Motor neuron (in vitro differentiated cells): ENCODE measurements at regions of chr5 and their contacts with region 1.

Region 1: DNA sequence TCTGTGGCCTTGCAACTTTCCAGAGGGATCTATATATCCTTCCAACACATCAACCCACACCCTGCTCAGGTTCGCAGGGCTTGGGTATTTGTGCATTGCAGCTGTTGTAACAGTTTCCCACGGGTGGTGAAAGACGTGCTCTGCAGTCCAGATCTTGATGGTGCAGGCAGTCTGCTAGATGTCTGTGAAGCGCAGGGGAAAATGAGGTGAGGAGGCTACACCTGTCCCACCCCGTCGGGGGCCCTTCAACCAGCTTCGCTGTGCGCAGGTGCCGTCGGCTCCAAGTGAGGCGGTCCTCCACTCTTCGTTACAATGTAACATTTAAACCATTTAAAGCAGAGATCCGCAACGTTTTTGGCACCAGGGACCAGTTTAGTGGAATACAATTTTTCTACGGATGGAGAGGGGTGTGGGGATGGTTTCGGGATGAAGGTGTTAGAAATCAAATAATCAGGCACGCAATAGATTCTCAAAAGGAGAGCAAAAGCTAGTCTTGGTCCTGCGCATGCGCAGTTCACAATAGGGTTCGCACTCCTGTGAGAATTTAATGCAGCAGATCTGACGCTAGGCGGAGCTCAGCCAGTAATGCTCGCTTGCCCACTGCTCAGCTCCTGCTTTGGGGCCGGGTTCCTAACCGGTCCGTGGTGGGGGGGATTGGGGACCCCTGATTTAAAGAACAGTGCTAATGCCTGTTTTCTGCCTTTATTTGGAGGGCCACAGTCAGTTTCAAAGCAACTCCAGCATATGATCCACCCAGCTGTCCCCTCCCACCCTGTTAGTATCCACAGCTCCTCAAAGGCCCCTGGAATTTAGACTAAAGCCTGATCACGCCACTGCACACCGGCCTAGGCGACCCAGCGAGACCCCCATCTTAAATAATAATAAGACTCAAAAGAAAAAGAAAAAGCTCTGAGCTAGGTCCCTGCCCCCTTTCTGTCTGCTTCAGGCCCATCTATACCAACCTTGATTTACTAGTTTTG is 97.1 kb upstream of the SELENOP start:
- ATAC-seq: peak; percentile 93 to 98 (median 96)
- H3K4me3 ChIP-seq: peak overlapping the region; percentile 37 to 52 (median 40)
- H3K27ac ChIP-seq: no peak overlapping the region
- H3K4me1 ChIP-seq: no peaks in the 10 kb centered on the region

Region 2: DNA sequence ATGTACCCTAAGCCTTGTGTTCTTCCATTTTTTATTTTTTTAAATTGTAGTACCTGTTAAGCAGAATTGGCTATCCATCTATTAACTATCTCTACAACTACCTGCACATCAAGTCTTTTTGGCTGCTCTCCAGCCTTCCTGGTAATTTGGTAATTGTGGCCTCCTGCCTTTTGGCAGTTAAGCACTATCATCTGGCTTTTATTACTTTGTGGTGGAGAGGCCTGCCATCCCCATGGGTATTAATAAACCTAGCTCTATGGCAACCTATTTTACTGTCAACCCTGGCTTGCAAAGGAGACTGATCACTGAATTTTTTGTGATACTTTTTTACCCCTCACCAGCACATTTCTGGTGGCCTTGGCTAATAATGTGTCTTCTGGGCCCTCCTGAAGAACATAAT is 117.6 kb before region 1 on chr5:
- in situ Hi-C with region 1: no loop called
- ATAC-seq: no peak
- H3K4me3 ChIP-seq: no peak overlapping the region
- H3K27ac ChIP-seq: no peak overlapping the region
- H3K4me1 ChIP-seq: no peaks in the 10 kb centered on the region

Region 3: DNA sequence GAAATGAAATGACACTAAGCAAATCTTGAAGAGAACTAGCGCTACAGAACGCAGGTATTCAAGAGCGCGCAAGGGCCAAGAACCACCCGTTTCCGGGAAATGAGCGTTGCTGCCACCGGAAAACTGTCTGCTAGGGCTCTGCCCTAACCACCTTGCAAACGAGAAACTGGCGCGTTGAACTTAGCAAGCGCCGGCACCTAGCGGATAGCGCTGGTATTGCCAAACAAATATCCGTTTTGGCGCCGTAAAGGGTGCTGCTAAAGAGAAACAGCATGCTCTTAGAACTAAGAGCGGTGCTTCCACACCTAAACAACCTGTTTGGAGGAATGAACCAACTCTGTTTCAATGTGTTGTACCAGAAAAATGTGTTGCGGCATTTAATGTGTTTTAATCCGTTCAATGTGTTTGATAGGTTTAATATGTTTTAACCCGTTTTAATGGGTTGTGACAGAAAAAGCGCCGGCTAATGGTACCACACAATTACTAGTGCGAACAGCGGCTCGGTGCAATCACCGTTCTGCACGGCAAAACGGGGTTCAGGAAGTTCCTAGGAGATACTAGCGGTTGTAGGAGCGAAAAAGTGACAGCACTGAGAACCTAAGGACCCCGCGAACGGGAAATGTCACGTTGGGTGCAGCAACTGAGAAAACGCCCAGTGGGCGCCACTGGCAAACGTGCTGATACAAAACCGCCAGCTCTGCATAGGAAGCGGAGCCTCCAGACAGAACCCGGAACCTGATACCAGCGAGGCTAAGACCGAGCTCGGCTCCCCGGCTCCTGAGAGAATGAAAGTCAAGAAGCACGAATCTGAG is 131.7 kb after region 1 on chr5 and contains the start of gene ANXA2R:
- in situ Hi-C with region 1: loop called in 1 of 9 experiments (anchors 25 kb)
- ATAC-seq: peak; percentile 39 to 67 (median 56)
- H3K4me3 ChIP-seq: peak within 1 kb of the TSS in 3 of 5 donors; percentile 5 to 50 (median 35)
- H3K27ac ChIP-seq: no peak within 1 kb of the TSS
- H3K4me1 ChIP-seq: peaks cover 0 to 3% of the 10 kb centered on the region in 2 donors
- total RNA-seq, gene ANXA2R: 0.11 to 5.4 (median 1.1) TPM